GM18951 (cell line): ENCODE measurements at regions of chr15 and their contacts with region 1.

Region 1: GRCh38 chr15:35078221-35078915 is 6.7 kb downstream of the NANOGP8 start:
- POLR2A ChIP-seq: no peak

Region 2: DNA sequence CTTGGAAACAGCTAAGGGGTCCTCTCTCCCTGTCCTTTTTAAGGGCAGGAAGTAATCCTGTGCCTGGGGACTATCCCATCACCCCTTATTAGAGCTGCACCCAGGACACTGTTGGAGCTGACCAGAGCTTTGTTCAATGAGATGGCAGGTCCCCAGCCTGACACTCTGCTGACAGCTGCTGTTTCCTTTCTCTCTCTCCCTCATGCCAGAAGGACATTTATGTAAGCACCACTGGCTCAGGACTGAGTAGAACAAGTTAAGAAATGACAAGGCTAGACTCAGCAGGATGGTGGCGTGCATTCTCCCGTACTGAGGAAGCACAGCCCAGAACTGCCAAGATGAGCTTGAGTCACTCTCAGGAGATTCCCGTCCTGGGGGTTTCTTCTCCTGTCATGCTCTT is 340.9 kb before region 1 on chr15:
- in situ Hi-C with region 1: no loop called
- POLR2A ChIP-seq: no peak

Region 3: GRCh38 chr15:35168464-35168863 is 90.1 kb after region 1 on chr15:
- in situ Hi-C with region 1: no loop called
- POLR2A ChIP-seq: no peak

Region 4: GRCh38 chr15:35289024-35289617 is 210.8 kb after region 1 on chr15:
- in situ Hi-C with region 1: loop called (anchors 10 kb)
- POLR2A ChIP-seq: no peak